Endothelial cell of umbilical vein (primary cell): ENCODE measurements at regions of chr18 and their contacts with region 1.

Region 1: GRCh38 chr18:26650310-26651268 is 102.2 kb upstream of the KCTD1 start:
- DNase-seq: no peak
- H3K4me3 ChIP-seq: no peak overlapping the region
- H3K27ac ChIP-seq: no peak overlapping the region
- H3K4me1 ChIP-seq: no peaks in the 10 kb centered on the region
- H3K27me3 ChIP-seq: peaks cover 40 to 51% of the 10 kb centered on the region in 2 experiments
- CTCF ChIP-seq: no peak
- POLR2A ChIP-seq: no peak

Region 2: DNA sequence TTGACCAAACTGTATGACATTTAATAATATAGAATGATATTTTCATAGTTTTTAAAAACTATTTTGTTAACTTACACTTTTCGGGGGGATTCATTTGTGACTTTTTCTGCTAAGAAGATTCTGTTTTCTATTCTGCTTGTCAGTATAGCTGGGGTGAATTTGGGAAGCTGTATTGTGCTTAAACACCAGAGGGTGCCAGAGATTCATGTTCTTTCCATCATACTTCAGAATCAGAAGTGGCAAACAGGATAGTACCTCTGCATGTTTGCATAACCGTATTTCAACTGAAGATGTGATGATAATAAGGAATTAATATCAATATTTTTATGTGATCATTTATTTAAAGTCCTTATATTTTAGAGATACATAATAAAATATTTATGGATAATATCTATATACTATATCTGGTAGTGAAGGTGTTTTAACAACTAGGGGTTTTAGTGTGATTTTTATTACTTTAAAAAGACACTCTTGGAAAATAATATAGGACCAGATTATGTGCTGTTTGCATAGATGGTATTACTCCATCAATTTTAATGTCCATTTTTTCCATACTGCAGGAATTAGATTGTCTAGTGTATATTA is 343.3 kb before region 1 on chr18:
- CTCF ChIA-PET with region 1: interaction called, 43 read pairs
- POLR2A ChIA-PET with region 1: no interaction called
- dilution Hi-C with region 1: no loop called
- intact Hi-C with region 1: loop called (anchors 1 kb)
- DNase-seq: peak; percentile 70
- H3K4me3 ChIP-seq: no peak overlapping the region
- H3K27ac ChIP-seq: no peak overlapping the region
- H3K4me1 ChIP-seq: peaks cover 3% of the 10 kb centered on the region
- H3K27me3 ChIP-seq: no peaks in the 10 kb centered on the region
- CTCF ChIP-seq: peak; percentile 43 to 57
- POLR2A ChIP-seq: no peak

Region 3: GRCh38 chr18:26405190-26405801 is 245.3 kb before region 1 on chr18:
- CTCF ChIA-PET with region 1: interaction called, 45 read pairs
- POLR2A ChIA-PET with region 1: no interaction called
- dilution Hi-C with region 1: no loop called
- intact Hi-C with region 1: loop called (anchors 1 kb)
- DNase-seq: peak; percentile 46
- H3K4me3 ChIP-seq: no peak overlapping the region
- H3K27ac ChIP-seq: no peak overlapping the region
- H3K4me1 ChIP-seq: no peaks in the 10 kb centered on the region
- H3K27me3 ChIP-seq: no peaks in the 10 kb centered on the region
- CTCF ChIP-seq: peak; percentile 35 to 53
- POLR2A ChIP-seq: no peak

Region 4: GRCh38 chr18:26458526-26459232 is 191.9 kb before region 1 on chr18:
- CTCF ChIA-PET with region 1: no interaction called
- POLR2A ChIA-PET with region 1: no interaction called
- dilution Hi-C with region 1: no loop called
- intact Hi-C with region 1: loop called (anchors 5 kb)
- DNase-seq: peak; percentile 18
- H3K4me3 ChIP-seq: no peak overlapping the region
- H3K27ac ChIP-seq: peak overlapping the region; percentile 27
- H3K4me1 ChIP-seq: peaks cover 30% of the 10 kb centered on the region
- H3K27me3 ChIP-seq: no peaks in the 10 kb centered on the region
- CTCF ChIP-seq: no peak
- POLR2A ChIP-seq: no peak

Region 5: GRCh38 chr18:26628017-26628416 is 22.6 kb before region 1 on chr18:
- CTCF ChIA-PET with region 1: no interaction called
- POLR2A ChIA-PET with region 1: no interaction called
- dilution Hi-C with region 1: no loop called
- intact Hi-C with region 1: no loop called
- DNase-seq: no peak
- H3K4me3 ChIP-seq: no peak overlapping the region
- H3K27ac ChIP-seq: no peak overlapping the region
- H3K4me1 ChIP-seq: no peaks in the 10 kb centered on the region
- H3K27me3 ChIP-seq: no peaks in the 10 kb centered on the region
- CTCF ChIP-seq: no peak
- POLR2A ChIP-seq: no peak

Region 6: DNA sequence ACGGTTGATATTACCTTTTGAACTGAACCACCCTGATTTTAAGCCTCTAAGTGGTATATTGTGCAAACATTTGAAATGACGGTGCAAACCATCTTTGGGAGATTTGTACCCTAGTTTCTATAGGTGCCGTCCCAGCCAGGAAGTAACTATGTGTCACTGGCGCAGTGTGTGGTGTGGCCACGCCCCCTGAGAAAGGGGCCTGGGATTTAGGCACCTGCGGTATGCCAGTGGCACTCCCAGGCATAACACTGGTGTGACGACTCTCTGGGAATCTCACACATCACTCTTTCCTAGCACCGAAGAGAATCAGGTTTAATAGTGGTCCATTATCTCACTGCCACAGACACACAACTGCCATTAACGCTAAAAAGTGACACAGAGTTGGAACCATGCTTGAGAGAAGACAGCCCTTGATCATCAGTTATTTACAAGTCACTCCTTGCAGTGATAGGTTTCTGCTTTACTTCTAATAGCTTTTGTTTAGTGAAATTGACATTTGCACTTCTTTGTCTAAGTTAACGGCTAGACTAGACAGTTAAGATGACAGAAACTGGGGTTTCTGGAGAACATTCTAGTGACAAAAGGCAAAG is 203.8 kb after region 1 on chr18:
- CTCF ChIA-PET with region 1: no interaction called
- POLR2A ChIA-PET with region 1: no interaction called
- dilution Hi-C with region 1: no loop called
- intact Hi-C with region 1: no loop called
- DNase-seq: no peak
- H3K4me3 ChIP-seq: no peak overlapping the region
- H3K27ac ChIP-seq: no peak overlapping the region
- H3K4me1 ChIP-seq: no peaks in the 10 kb centered on the region
- H3K27me3 ChIP-seq: no peaks in the 10 kb centered on the region
- CTCF ChIP-seq: no peak
- POLR2A ChIP-seq: no peak